ENCODE measurements at regions of chr10 and their contacts with region 1.

Region 1: GRCh38 chr10:61943674-61944410 is 42.3 kb downstream of the ARID5B start:
- DNase-seq: no peak
- H3K4me3 ChIP-seq: no peak overlapping the region
- H3K27ac ChIP-seq: peak overlapping the region; percentile 70 to 84 (median 80)
- H3K4me1 ChIP-seq: peaks cover 0 to 58% (median 44%) of the 10 kb centered on the region in 4 donors
- H3K27me3 ChIP-seq: no peaks in the 10 kb centered on the region
- CTCF ChIP-seq: peak in 1 of 4 experiments; percentile 10
- EP300 ChIP-seq: no peak
- POLR2A ChIP-seq: no peak

Region 2: DNA sequence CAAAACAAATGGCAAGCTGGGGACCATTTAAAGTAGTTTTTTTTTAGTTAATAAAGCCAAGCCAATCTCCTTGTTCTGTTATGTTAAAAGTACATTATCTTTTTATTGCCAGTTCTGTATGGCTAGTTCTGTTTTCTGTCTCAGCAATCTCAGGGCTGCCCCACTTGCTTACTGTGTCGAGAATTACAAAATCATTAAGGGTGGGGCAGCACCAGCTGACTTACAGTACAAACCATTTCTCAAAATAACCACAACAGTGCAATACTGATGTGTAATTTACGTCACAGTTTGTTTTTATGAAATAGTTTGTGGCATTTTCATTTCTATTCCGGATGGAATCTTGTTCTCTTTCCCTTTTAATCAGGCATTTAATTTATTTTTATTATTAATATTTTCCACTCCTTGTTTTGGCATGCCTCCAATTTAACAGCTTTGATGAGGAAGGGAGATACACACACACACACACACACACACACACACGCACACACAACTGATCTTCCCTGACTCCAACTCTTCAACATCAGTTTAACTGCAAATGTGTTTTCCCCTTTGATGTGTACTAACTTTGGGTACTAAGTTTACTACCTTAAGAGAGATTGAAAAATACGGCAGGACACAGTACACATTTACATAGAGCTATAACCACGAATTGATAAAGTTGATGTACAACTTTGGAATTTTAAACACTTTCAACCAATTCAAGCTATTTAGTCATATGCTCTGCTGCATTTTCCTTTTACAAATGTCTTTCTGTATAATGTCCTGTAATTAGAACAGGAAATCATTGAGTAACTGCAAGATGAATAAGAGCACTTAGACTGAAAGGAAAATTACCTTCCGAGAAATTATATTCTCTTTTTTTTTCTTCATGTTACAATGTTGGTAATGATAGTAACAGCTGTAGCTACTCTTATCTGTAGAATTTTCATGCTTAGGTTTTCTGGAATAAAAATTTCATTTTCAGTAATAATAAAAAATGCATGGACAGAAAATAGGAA is 49.1 kb after region 1 on chr10:
- intact Hi-C with region 1: loop called (anchors 5 kb)
- DNase-seq: peak; percentile 86
- H3K4me3 ChIP-seq: peak overlapping the region in 3 of 4 donors; percentile 1 to 14 (median 7)
- H3K27ac ChIP-seq: peak overlapping the region; percentile 60 to 81 (median 78)
- H3K4me1 ChIP-seq: peaks cover 0 to 48% (median 33%) of the 10 kb centered on the region in 4 donors
- H3K27me3 ChIP-seq: no peaks in the 10 kb centered on the region
- CTCF ChIP-seq: no peak
- EP300 ChIP-seq: peak; percentile 51 to 96 (median 88)
- POLR2A ChIP-seq: no peak

Region 3: DNA sequence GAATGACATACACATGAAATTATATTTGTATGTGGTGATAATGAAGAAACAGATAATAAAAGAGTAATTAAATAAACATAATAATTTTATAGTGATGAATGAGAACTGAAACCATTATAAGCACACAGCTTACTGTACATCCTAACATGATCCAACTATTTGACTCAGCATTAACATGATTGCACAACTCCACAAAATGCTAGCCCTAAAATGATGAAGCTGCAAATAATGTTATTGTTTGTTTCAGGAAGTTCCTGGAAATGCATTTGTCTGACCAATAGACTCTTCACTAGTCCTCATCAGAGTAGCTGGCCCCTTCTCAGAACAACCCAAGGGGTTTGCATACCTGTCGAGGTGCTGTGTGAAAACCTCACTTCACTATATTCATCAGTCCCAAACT is 209.3 kb after region 1 on chr10:
- intact Hi-C with region 1: no loop called
- DNase-seq: no peak
- H3K4me3 ChIP-seq: no peak overlapping the region
- H3K27ac ChIP-seq: no peak overlapping the region
- H3K4me1 ChIP-seq: no peaks in the 10 kb centered on the region
- H3K27me3 ChIP-seq: no peaks in the 10 kb centered on the region
- CTCF ChIP-seq: no peak
- EP300 ChIP-seq: no peak
- POLR2A ChIP-seq: no peak

Measured in sigmoid colon (tissue), 7 donors.